HCT116 (cell line): ENCODE measurements at regions of chr3 and their contacts with region 1.

Region 1: GRCh38 chr3:15108082-15108545 is 9.2 kb upstream of the RBSN start:
- DNase-seq: peak; percentile 65
- ATAC-seq: peak; percentile 98
- H3K4me3 ChIP-seq: no peak overlapping the region
- H3K27ac ChIP-seq: no peak overlapping the region
- H3K4me1 ChIP-seq: peaks cover 0 to 5% of the 10 kb centered on the region in 2 experiments; a peak in 1 of 4 replicates
- H3K27me3 ChIP-seq: no peaks in the 10 kb centered on the region
- CTCF ChIP-seq: peak; percentile 67 to 97 (median 95)
- POLR2A ChIP-seq: no peak
- RAD21 ChIP-seq: peak; percentile 90

Region 2: DNA sequence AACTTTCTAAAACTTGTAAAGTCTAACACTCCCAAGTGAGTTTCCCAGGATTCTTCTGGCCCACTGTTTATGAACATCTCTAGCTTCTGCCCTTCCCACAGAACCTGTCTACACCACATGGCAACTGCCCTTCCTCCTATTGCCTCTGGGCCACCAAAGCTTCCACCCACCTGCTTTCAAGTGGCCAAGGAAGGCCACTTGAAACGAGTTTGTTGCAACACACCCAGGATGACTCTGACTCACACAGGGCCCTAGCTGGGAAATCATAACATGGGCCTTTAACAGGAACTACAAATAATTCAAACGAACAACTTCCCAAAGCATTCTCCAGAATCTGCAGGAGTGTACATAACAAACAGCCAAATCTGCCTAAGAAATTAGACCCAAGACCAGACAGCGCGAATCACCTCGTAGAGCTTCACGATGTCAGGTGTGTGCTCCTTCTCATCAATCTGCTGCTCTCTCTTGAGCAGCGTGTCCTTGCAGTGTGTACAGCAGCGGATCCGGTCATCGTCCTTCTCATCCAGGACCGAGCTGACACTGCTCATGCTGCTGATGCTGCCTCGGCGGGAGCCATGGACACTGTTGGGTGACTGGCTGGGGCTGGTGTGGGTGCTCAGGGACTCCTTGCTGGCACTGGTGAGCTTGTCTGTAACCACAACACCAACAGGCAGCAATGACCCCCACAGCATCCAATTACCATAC is 26.0 kb before region 1 on chr3:
- CTCF ChIA-PET with region 1: no interaction called
- POLR2A ChIA-PET with region 1: no interaction called
- RAD21 ChIA-PET with region 1: no interaction called
- intact Hi-C with region 1: no loop called
- DNase-seq: no peak
- ATAC-seq: no peak
- H3K4me3 ChIP-seq: no peak overlapping the region
- H3K27ac ChIP-seq: no peak overlapping the region
- H3K4me1 ChIP-seq: no peaks in the 10 kb centered on the region
- H3K27me3 ChIP-seq: no peaks in the 10 kb centered on the region
- CTCF ChIP-seq: no peak
- POLR2A ChIP-seq: no peak
- RAD21 ChIP-seq: no peak

Region 3: DNA sequence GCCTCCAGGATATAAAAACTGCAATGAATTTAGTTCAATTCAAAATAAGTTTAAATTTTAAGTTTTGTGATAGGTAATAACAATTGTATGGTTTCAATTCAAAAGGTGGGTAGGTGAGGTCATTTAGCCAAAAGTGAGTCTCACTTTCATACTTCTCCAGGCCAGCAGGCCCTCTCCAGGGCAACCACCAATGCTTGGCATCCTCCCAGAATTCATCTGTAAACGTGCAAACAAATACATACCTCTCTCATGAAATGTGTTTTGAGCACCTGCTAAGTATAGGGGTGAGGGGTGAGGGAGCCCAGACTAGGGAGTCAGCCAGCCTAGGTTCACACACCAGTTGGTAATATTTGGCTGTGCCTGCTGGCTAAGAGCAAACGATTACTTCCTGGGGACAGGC is 12.9 kb after region 1 on chr3:
- CTCF ChIA-PET with region 1: interaction called, 10 read pairs
- POLR2A ChIA-PET with region 1: no interaction called
- RAD21 ChIA-PET with region 1: no interaction called
- intact Hi-C with region 1: no loop called
- DNase-seq: no peak
- ATAC-seq: no peak
- H3K4me3 ChIP-seq: no peak overlapping the region
- H3K27ac ChIP-seq: no peak overlapping the region
- H3K4me1 ChIP-seq: peaks cover 0 to 5% of the 10 kb centered on the region in 2 experiments; a peak in 1 of 4 replicates
- H3K27me3 ChIP-seq: no peaks in the 10 kb centered on the region
- CTCF ChIP-seq: no peak
- POLR2A ChIP-seq: no peak
- RAD21 ChIP-seq: no peak

Region 4: GRCh38 chr3:15377961-15378791 is 270.1 kb after region 1 on chr3:
- CTCF ChIA-PET with region 1: no interaction called
- POLR2A ChIA-PET with region 1: no interaction called
- RAD21 ChIA-PET with region 1: no interaction called
- intact Hi-C with region 1: loop called (anchors 5 kb)
- DNase-seq: peak; percentile 91
- ATAC-seq: peak; percentile 97
- H3K4me3 ChIP-seq: no peak overlapping the region
- H3K27ac ChIP-seq: peak overlapping the region; percentile 39; the same call in 1 of the 2 replicates
- H3K4me1 ChIP-seq: peaks cover 0 to 11% of the 10 kb centered on the region in 2 experiments; a peak in 2 of 4 replicates
- H3K27me3 ChIP-seq: no peaks in the 10 kb centered on the region
- CTCF ChIP-seq: peak; percentile 91 to 92 (median 91)
- POLR2A ChIP-seq: no peak
- RAD21 ChIP-seq: peak; percentile 98

Region 5: DNA sequence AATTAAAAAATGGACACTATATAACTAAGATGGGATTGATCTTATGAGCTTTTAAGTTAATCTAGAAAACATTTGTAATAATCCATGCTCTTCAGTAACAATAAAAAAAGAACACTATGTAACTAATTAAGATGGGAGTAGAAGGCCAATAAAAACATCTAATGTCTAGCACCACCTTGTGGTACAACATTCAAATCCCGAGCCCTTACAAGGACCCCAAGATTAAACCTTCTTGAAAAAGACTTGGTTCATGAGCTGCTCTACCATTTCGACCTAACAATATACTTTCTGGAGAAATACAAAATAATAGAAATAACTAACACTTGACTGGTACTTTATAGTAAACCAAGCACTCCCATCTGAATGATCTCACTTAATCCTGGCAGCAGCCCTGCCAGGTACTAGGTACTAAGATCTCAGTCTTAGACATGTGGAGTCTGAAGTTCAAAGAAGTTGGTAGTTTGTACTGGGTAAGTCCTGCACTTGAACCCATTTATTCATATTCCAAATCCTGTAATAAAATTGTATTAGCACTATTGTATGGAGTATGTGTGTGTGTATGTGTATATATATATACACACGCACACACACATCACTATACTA is 297.4 kb after region 1 on chr3:
- CTCF ChIA-PET with region 1: interaction called, 18 read pairs
- POLR2A ChIA-PET with region 1: no interaction called
- RAD21 ChIA-PET with region 1: interaction called in 1 of 2 experiments, 3 read pairs
- intact Hi-C with region 1: loop called (anchors 2 kb)
- DNase-seq: peak; percentile 48
- ATAC-seq: peak; percentile 81
- H3K4me3 ChIP-seq: no peak overlapping the region
- H3K27ac ChIP-seq: no peak overlapping the region
- H3K4me1 ChIP-seq: peaks cover 0 to 5% of the 10 kb centered on the region in 2 experiments; a peak in 1 of 4 replicates
- H3K27me3 ChIP-seq: no peaks in the 10 kb centered on the region
- CTCF ChIP-seq: peak; percentile 55 to 74 (median 69)
- POLR2A ChIP-seq: no peak
- RAD21 ChIP-seq: peak; percentile 74

Region 6: GRCh38 chr3:15557511-15557946 is 449.4 kb after region 1 on chr3:
- CTCF ChIA-PET with region 1: no interaction called
- POLR2A ChIA-PET with region 1: no interaction called
- RAD21 ChIA-PET with region 1: no interaction called
- intact Hi-C with region 1: loop called (anchors 5 kb)
- DNase-seq: peak; percentile 82
- ATAC-seq: peak; percentile 100
- H3K4me3 ChIP-seq: no peak overlapping the region
- H3K27ac ChIP-seq: peak overlapping the region; percentile 21; the same call in 1 of the 2 replicates
- H3K4me1 ChIP-seq: peaks cover 4 to 6% of the 10 kb centered on the region in 2 experiments; a peak in 3 of 4 replicates
- H3K27me3 ChIP-seq: no peaks in the 10 kb centered on the region
- CTCF ChIP-seq: peak; percentile 47 to 71 (median 62); a peak in 4 of 6 replicates
- POLR2A ChIP-seq: no peak
- RAD21 ChIP-seq: peak; percentile 67